ENCODE measurements at regions of chr19 and their contacts with region 1.

Region 1: GRCh38 chr19:41548954-41549688 is 26.8 kb upstream of the CEACAM21 start:
- DNase-seq: peak; percentile 72 to 82 (median 75)
- H3K4me3 ChIP-seq: peak overlapping the region; percentile 75 to 91
- H3K4me3 Mint-ChIP-seq: peak overlapping the region; percentile 98 to 100 (median 99)
- H3K27ac ChIP-seq: peak overlapping the region; percentile 63
- H3K27ac Mint-ChIP-seq: peak overlapping the region; percentile 89 to 98 (median 97)
- H3K4me1 ChIP-seq: peaks cover 63% of the 10 kb centered on the region
- H3K4me1 Mint-ChIP-seq: peaks cover 50 to 82% (median 61%) of the 10 kb centered on the region in 4 donors
- H3K27me3 ChIP-seq: no peaks in the 10 kb centered on the region
- H3K27me3 Mint-ChIP-seq: no peaks in the 10 kb centered on the region

Region 2: GRCh38 chr19:41397086-41398049 is 151.8 kb before region 1 on chr19 and contains the starts of genes BCKDHA and EXOSC5:
- CTCF ChIA-PET with region 1: no interaction called
- POLR2A ChIA-PET with region 1: no interaction called
- intact Hi-C with region 1: loop called (anchors 5 kb)
- DNase-seq: peak; percentile 98 to 100 (median 100)
- H3K4me3 ChIP-seq: peak within 1 kb of the TSS; percentile 94 to 96
- H3K4me3 Mint-ChIP-seq: peak within 1 kb of the TSS; percentile 94 to 100 (median 98)
- H3K27ac ChIP-seq: peak within 1 kb of the TSS; percentile 93
- H3K27ac Mint-ChIP-seq: peak within 1 kb of the TSS; percentile 98 to 100 (median 100)
- H3K4me1 ChIP-seq: peaks cover 31% of the 10 kb centered on the region
- H3K4me1 Mint-ChIP-seq: peaks cover 27 to 54% (median 41%) of the 10 kb centered on the region in 4 donors
- H3K27me3 ChIP-seq: no peaks in the 10 kb centered on the region
- H3K27me3 Mint-ChIP-seq: no peaks in the 10 kb centered on the region
- total RNA-seq, gene BCKDHA: 23.6 to 27.1 TPM
- total RNA-seq, gene EXOSC5: 18.2 to 23.0 TPM

Region 3: DNA sequence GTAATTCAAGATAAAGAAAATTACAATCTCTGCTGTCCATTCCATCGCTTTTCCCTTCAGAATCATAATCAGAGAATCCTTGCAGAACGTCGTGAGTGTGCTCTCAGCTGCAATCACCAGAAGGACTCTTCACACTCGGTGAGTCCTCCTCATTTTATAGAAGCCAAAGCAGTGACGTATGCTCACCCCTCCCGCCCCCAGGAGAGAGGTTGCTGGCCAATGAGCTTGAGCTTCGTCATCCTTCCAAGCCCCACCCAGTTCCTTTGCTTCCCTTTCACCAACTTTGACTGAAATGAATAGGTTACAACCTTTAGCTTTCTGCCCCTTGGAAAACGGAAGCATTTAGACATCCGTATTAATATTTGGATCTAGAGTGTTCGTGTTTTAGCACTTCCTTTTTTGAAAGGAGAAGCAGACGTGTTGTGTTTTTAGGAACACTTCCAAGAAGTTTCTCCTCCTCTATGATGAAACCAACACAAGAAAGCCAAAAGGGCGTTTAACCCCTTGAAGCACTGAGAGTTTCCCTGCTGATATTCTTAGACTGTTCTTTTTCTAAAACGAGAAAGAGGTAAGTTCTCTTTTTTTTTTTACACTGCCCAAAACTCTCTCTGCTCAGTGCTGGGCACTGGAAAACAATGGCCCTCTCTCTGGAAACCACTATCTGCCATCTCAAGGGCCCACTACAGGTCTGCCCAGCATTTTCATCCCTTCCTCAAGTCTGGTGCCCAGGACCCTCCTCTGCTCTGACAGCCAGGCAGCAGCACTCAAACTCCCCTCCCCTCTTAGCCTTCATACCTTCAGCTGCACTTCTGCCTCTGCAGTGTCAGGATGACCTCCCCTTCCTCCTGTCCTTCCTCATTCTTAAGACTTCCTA is 17.4 kb before region 1 on chr19:
- CTCF ChIA-PET with region 1: interaction called, 4 read pairs
- POLR2A ChIA-PET with region 1: interaction called, 547 read pairs
- intact Hi-C with region 1: loop called (anchors 2 kb)
- DNase-seq: peak; percentile 80 to 93 (median 88)
- H3K4me3 ChIP-seq: peak overlapping the region; percentile 30 to 37
- H3K4me3 Mint-ChIP-seq: peak overlapping the region; percentile 77 to 88 (median 86)
- H3K27ac ChIP-seq: peak overlapping the region; percentile 53
- H3K27ac Mint-ChIP-seq: peak overlapping the region; percentile 82 to 98 (median 94)
- H3K4me1 ChIP-seq: peaks cover 53% of the 10 kb centered on the region
- H3K4me1 Mint-ChIP-seq: peaks cover 33 to 60% (median 49%) of the 10 kb centered on the region in 4 donors
- H3K27me3 ChIP-seq: no peaks in the 10 kb centered on the region
- H3K27me3 Mint-ChIP-seq: peaks cover 1 to 3% of the 10 kb centered on the region in 2 donors

Region 4: GRCh38 chr19:41563854-41564514 is 14.9 kb after region 1 on chr19:
- CTCF ChIA-PET with region 1: interaction called, 561 read pairs
- POLR2A ChIA-PET with region 1: interaction called, 547 read pairs
- intact Hi-C with region 1: loop called (anchors 1 kb)
- DNase-seq: peak in 4 of 5 donors; percentile 58 to 88 (median 66)
- H3K4me3 ChIP-seq: peak overlapping the region in 1 of 2 donors; percentile 36
- H3K4me3 Mint-ChIP-seq: peak overlapping the region; percentile 31 to 85 (median 70)
- H3K27ac ChIP-seq: peak overlapping the region; percentile 28
- H3K27ac Mint-ChIP-seq: peak overlapping the region in 6 of 7 donors; percentile 82 to 94 (median 88)
- H3K4me1 ChIP-seq: peaks cover 75% of the 10 kb centered on the region
- H3K4me1 Mint-ChIP-seq: peaks cover 54 to 91% (median 70%) of the 10 kb centered on the region in 4 donors
- H3K27me3 ChIP-seq: no peaks in the 10 kb centered on the region
- H3K27me3 Mint-ChIP-seq: no peaks in the 10 kb centered on the region

Region 5: DNA sequence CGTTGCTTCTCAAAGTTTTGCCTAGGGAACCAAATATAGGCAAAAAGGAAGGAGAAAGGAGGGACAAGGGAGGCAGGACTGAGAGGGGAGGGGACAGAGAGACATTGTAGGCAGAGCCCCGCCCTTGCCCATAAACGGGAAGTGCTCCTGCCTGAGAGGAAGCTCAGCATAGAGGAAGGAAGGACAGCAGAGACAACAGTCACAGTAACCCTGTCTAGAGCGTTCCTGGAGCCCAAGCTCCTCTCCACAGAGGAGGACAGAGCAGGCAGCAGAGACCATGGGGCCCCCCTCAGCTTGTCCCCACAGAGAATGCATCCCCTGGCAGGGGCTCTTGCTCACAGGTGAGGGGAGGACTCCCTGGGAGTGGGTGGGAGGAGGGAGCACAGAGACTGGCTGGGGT is 26.9 kb after region 1 on chr19 and contains the start of gene CEACAM21:
- CTCF ChIA-PET with region 1: interaction called, 561 read pairs
- POLR2A ChIA-PET with region 1: interaction called, 547 read pairs
- intact Hi-C with region 1: no loop called
- DNase-seq: peak in 1 of 5 donors; percentile 59
- H3K4me3 ChIP-seq: peak within 1 kb of the TSS in 1 of 2 donors; percentile 35
- H3K4me3 Mint-ChIP-seq: peak within 1 kb of the TSS; percentile 54 to 83 (median 68)
- H3K27ac ChIP-seq: peak within 1 kb of the TSS; percentile 8
- H3K27ac Mint-ChIP-seq: peak within 1 kb of the TSS; percentile 73 to 91 (median 84)
- H3K4me1 ChIP-seq: peaks cover 22% of the 10 kb centered on the region
- H3K4me1 Mint-ChIP-seq: peaks cover 21 to 36% (median 28%) of the 10 kb centered on the region in 4 donors
- H3K27me3 ChIP-seq: no peaks in the 10 kb centered on the region
- H3K27me3 Mint-ChIP-seq: no peaks in the 10 kb centered on the region
- total RNA-seq, gene CEACAM21: 42.8 to 48.7 TPM